PC-9 (cell line): ENCODE measurements at regions of chr7 and their contacts with region 1.

Region 1: GRCh38 chr7:106812027-106812643 is 52.9 kb upstream of the PIK3CG start:
- DNase-seq: no peak
- H3K4me3 ChIP-seq: no peak overlapping the region
- H3K27ac ChIP-seq: no peak overlapping the region
- H3K4me1 ChIP-seq: no peaks in the 10 kb centered on the region
- H3K27me3 ChIP-seq: no peaks in the 10 kb centered on the region
- CTCF ChIP-seq: no peak

Region 2: DNA sequence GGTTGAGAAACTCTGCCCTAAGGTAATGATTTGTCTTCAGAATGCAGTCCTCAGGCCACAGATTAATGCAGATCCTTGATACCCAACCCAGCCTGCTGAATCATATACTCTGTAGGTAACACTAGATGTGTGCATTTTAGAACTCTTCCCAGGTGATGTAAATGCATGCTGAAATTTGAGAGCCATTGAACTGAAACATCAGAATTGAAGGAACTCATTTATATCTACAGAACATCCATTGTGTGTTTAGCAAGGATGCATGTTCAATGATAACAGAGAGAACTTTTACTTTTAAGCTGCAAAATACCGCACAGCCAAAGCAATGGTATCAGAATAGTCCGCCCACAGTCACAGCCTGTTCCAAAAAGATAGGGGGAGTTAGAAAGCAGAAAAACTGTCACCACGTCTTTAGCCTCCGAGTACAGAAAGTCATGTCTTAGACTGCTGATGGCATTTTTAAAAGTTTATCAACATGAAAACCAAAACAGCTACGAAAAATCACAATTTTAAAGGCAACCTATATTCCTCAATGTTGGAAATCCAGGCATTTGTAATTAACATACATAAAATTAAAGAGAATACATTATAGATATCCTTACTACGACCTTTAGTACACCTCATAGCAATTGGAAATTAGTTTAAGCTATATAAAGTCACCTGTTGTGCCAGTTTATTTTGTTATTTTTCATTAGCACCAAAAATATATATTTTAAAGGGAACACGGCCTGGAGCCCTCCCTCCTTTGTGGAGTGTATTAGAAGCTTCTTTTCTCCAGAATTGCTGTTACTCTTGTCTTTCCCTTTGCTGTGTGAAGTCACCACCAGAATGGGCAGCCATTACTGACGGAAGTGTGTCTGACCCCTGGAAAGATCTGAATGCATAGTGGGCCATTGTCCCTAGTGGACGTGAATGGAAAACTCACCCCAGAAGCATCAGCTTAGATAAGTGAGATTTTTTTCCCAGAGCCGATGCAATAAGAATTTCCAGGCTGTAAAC is 166.6 kb after region 1 on chr7:
- CTCF ChIA-PET with region 1: no interaction called
- POLR2A ChIA-PET with region 1: no interaction called
- intact Hi-C with region 1: no loop called
- DNase-seq: no peak
- H3K4me3 ChIP-seq: no peak overlapping the region
- H3K27ac ChIP-seq: no peak overlapping the region
- H3K4me1 ChIP-seq: no peaks in the 10 kb centered on the region
- H3K27me3 ChIP-seq: no peaks in the 10 kb centered on the region
- CTCF ChIP-seq: no peak

Region 3: DNA sequence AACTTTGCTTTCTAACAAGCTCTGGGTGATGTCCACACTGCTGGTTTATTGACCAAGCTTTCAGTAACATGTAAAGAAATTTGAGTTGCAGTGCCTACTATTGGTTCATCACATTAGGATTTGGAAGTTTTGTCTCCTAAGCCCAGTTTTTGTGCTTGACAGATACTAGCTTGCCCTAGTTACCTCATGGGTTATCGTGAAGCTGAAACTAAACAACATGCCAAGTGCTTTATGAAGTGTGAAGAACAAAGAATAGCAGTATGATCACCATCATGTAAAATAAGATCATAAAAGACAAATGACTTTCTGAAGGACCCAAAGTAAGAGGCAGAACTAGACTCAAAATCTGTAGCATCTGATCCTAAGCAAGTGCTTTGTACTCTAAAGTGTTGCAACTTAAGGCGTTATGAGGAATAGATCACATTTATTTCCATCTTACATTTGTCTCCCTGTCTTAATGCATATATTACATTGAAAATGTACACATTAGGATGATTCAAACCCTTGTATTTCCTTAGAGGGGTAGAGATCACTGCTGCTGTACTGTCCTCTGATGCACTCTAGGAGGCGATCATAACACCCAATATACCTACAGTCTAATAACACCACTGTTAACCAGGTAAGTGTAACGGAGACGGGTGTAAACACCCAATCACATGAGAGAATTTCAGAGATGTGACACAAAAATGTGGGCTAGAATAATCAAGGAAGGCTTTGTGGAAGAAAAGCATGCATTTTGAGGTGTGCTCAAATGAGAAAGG is 1572.8 kb after region 1 on chr7:
- CTCF ChIA-PET with region 1: no interaction called
- POLR2A ChIA-PET with region 1: interaction called, 10 read pairs
- intact Hi-C with region 1: no loop called
- DNase-seq: no peak
- H3K4me3 ChIP-seq: no peak overlapping the region
- H3K27ac ChIP-seq: no peak overlapping the region
- H3K4me1 ChIP-seq: no peaks in the 10 kb centered on the region
- H3K27me3 ChIP-seq: no peaks in the 10 kb centered on the region
- CTCF ChIP-seq: no peak